ENCODE measurements at regions of chr10 and their contacts with region 1.

Region 1: DNA sequence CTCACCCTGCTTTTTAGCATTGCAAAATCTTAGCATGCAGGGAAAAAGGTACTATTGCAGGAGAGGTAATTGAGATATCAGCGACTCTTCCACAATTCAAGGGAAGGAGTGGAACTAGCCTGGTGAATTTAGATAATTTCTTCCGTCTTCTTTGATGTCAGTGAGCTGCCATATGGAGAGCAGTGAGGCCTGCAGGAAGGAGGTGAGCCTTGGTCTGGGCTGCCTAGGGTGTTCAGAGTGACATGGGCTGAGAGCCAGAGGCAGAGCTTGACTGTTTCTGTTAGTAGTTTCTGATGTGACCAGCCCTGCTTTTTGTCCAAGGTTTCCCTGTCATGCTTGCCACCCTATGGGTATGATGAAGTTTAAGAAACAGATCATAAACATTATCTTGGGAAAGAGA is 28.6 kb downstream of the KAT6B start:
- DNase-seq: no peak
- ATAC-seq: peak; percentile 83
- H3K4me3 ChIP-seq: peak overlapping the region; percentile 22; the same call in 1 of the 2 replicates
- H3K27ac ChIP-seq: peak overlapping the region; percentile 82
- H3K4me1 ChIP-seq: peaks cover 19% of the 10 kb centered on the region
- H3K27me3 ChIP-seq: no peaks in the 10 kb centered on the region
- CTCF ChIP-seq: no peak
- EP300 ChIP-seq: no peak
- POLR2A ChIP-seq: 0 out of 2 replicates have a peak, but pooled peaks have one; percentile 20
- RAD21 ChIP-seq: no peak

Region 2: GRCh38 chr10:74786088-74786487 is 68.9 kb before region 1 on chr10:
- CTCF ChIA-PET with region 1: no interaction called
- POLR2A ChIA-PET with region 1: no interaction called
- RAD21 ChIA-PET with region 1: no interaction called
- SMC1A ChIA-PET with region 1: no interaction called
- in situ Hi-C with region 1: no loop called
- intact Hi-C with region 1: no loop called
- DNase-seq: no peak
- ATAC-seq: no peak; the same call in 1 of the 3 replicates
- H3K4me3 ChIP-seq: no peak overlapping the region
- H3K27ac ChIP-seq: no peak overlapping the region
- H3K4me1 ChIP-seq: no peaks in the 10 kb centered on the region
- H3K27me3 ChIP-seq: no peaks in the 10 kb centered on the region
- CTCF ChIP-seq: no peak
- EP300 ChIP-seq: no peak
- POLR2A ChIP-seq: no peak
- RAD21 ChIP-seq: no peak

Region 3: GRCh38 chr10:74842301-74842954 is 12.6 kb before region 1 on chr10:
- CTCF ChIA-PET with region 1: interaction called, 5 read pairs
- POLR2A ChIA-PET with region 1: interaction called, 7 read pairs
- RAD21 ChIA-PET with region 1: interaction called, 3 read pairs
- SMC1A ChIA-PET with region 1: interaction called, 18 read pairs
- in situ Hi-C with region 1: no loop called
- intact Hi-C with region 1: no loop called
- DNase-seq: no peak
- ATAC-seq: peak; percentile 68
- H3K4me3 ChIP-seq: no peak overlapping the region
- H3K27ac ChIP-seq: no peak overlapping the region
- H3K4me1 ChIP-seq: no peaks in the 10 kb centered on the region
- H3K27me3 ChIP-seq: no peaks in the 10 kb centered on the region
- CTCF ChIP-seq: no peak
- EP300 ChIP-seq: no peak
- POLR2A ChIP-seq: no peak
- RAD21 ChIP-seq: no peak